Endothelial cell of umbilical vein (primary cell): ENCODE measurements at regions of chr9 and their contacts with region 1.

Region 1: DNA sequence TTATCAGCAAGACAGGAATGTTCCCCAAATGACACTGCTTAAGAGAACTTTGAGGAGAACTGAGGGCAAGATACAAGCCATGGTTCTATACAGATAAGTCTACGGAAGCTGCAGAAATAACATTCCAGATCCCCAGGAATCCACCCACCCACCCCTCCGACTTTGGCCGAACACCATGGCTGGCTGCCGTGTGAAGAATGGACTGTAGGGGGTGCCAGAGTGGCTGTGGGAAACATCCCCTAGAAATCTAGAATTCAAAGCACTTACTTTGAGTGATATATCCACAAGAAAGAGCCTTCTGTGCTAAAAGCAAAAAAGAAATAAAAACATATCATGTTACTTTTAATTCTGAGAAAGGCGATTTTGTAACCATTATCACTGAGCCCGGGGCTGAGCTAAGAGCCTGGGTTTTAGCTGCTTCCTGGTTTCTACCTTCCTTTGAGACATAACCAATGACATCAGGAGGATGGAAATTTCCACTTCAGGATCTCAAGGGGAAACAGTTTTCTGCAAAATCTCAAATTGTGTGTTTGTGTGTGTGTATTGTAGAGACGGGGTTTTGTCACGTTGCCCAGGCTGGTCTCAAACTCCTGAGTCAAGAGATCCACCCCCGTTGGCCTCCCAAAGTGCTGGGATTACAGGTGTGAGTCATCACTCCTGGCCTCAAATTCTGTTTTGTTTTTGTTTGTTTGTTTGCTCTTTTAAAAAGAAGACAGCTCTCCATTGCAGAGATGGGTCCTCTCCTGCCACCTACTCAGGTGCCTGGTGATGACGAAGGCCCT is 36.4 kb downstream of the GGTA1 start:
- DNase-seq: peak; percentile 54
- H3K4me3 ChIP-seq: no peak overlapping the region
- H3K27ac ChIP-seq: no peak overlapping the region
- H3K4me1 ChIP-seq: no peaks in the 10 kb centered on the region
- H3K27me3 ChIP-seq: peaks cover 19% of the 10 kb centered on the region in 2 experiments
- CTCF ChIP-seq: peak; percentile 64 to 83
- POLR2A ChIP-seq: no peak

Region 2: GRCh38 chr9:121498150-121498486 is 34.9 kb after region 1 on chr9:
- CTCF ChIA-PET with region 1: interaction called, 10 read pairs
- POLR2A ChIA-PET with region 1: no interaction called
- dilution Hi-C with region 1: no loop called
- intact Hi-C with region 1: loop called (anchors 1 kb)
- DNase-seq: peak; percentile 83
- H3K4me3 ChIP-seq: no peak overlapping the region
- H3K27ac ChIP-seq: no peak overlapping the region
- H3K4me1 ChIP-seq: peaks cover 16% of the 10 kb centered on the region
- H3K27me3 ChIP-seq: peaks cover 11 to 17% of the 10 kb centered on the region in 2 experiments
- CTCF ChIP-seq: peak; percentile 66 to 68
- POLR2A ChIP-seq: no peak

Region 3: GRCh38 chr9:121538246-121538645 is 75.0 kb after region 1 on chr9:
- CTCF ChIA-PET with region 1: no interaction called
- POLR2A ChIA-PET with region 1: no interaction called
- dilution Hi-C with region 1: no loop called
- intact Hi-C with region 1: loop called (anchors 1 kb)
- DNase-seq: no peak
- H3K4me3 ChIP-seq: no peak overlapping the region
- H3K27ac ChIP-seq: no peak overlapping the region
- H3K4me1 ChIP-seq: no peaks in the 10 kb centered on the region
- H3K27me3 ChIP-seq: peaks cover 2 to 5% of the 10 kb centered on the region in 2 experiments
- CTCF ChIP-seq: no peak
- POLR2A ChIP-seq: no peak